ENCODE measurements at regions of chr12 and their contacts with region 1.

Region 1: GRCh38 chr12:132502149-132502877 is 12.4 kb downstream of the FBRSL1 start:
- DNase-seq: no peak
- H3K4me3 ChIP-seq: no peak overlapping the region
- H3K27ac ChIP-seq: no peak overlapping the region
- H3K4me1 ChIP-seq: peaks cover 0 to 30% of the 10 kb centered on the region in 2 donors
- H3K27me3 ChIP-seq: no peaks in the 10 kb centered on the region
- CTCF ChIP-seq: no peak
- POLR2A ChIP-seq: no peak

Region 2: GRCh38 chr12:131420867-131421447 is 1081.4 kb before region 1 on chr12:
- intact Hi-C with region 1: loop called (anchors 5 kb)
- DNase-seq: no peak
- H3K4me3 ChIP-seq: no peak overlapping the region
- H3K27ac ChIP-seq: no peak overlapping the region
- H3K4me1 ChIP-seq: no peaks in the 10 kb centered on the region
- H3K27me3 ChIP-seq: peaks cover 0 to 22% of the 10 kb centered on the region in 2 donors
- CTCF ChIP-seq: no peak
- POLR2A ChIP-seq: no peak

Region 3: GRCh38 chr12:132018193-132018916 is 484.0 kb before region 1 on chr12:
- intact Hi-C with region 1: no loop called
- DNase-seq: no peak
- H3K4me3 ChIP-seq: no peak overlapping the region
- H3K27ac ChIP-seq: no peak overlapping the region
- H3K4me1 ChIP-seq: no peaks in the 10 kb centered on the region
- H3K27me3 ChIP-seq: no peaks in the 10 kb centered on the region
- CTCF ChIP-seq: no peak
- POLR2A ChIP-seq: no peak

Measured in breast epithelium (tissue), 4 donors.